GM12878 (cell line): ENCODE measurements at regions of chr5 and their contacts with region 1.

Region 1: DNA sequence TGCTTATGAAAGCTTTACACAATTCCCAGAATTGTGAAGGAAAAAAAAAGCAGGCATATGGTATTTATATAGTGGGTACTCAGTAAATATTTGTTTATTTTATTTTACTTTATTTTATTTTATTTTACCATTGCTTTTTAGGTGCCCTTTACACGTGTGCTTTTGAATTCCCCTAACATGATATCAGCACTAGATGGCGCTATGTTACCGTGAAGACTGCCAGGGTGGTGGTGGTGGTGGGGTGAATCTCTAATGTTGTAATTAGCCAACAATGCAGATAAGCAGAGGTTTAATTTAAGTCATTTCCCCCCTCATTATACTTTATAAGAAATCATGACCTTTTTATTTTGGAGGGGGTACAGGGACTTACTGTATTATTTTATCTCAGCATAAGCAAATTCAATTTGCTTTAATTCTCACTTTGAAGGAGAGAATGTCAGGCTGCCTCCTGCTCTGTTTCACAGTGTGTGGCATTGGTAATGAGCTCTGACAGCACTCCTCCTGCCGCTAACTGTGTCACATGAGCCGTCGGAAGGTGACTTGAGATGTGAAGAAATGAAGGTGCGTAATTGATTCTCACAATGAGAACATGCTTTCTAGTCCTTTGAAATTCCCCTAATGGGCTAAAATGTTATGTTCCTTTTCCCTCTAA is 165.6 kb downstream of the YTHDC2 start:
- DNase-seq: peak; percentile 8
- ATAC-seq: peak; percentile 96
- H3K4me3 ChIP-seq: no peak overlapping the region
- H3K27ac ChIP-seq: no peak overlapping the region
- H3K4me1 ChIP-seq: no peaks in the 10 kb centered on the region
- H3K27me3 ChIP-seq: no peaks in the 10 kb centered on the region
- CTCF ChIP-seq: peak; percentile 66 to 83 (median 68)
- EP300 ChIP-seq: no peak
- POLR2A ChIP-seq: no peak
- RAD21 ChIP-seq: peak; percentile 97

Region 2: GRCh38 chr5:114089259-114089658 is 410.2 kb after region 1 on chr5:
- CTCF ChIA-PET with region 1: interaction called, 3 read pairs
- POLR2A ChIA-PET with region 1: no interaction called
- RAD21 ChIA-PET with region 1: no interaction called
- SMC1A ChIA-PET with region 1: no interaction called
- in situ Hi-C with region 1: no loop called
- intact Hi-C with region 1: loop called (anchors 10 kb)
- DNase-seq: no peak
- ATAC-seq: no peak
- H3K4me3 ChIP-seq: no peak overlapping the region
- H3K27ac ChIP-seq: no peak overlapping the region
- H3K4me1 ChIP-seq: no peaks in the 10 kb centered on the region
- H3K27me3 ChIP-seq: no peaks in the 10 kb centered on the region
- CTCF ChIP-seq: no peak
- EP300 ChIP-seq: no peak
- POLR2A ChIP-seq: no peak
- RAD21 ChIP-seq: no peak

Region 3: DNA sequence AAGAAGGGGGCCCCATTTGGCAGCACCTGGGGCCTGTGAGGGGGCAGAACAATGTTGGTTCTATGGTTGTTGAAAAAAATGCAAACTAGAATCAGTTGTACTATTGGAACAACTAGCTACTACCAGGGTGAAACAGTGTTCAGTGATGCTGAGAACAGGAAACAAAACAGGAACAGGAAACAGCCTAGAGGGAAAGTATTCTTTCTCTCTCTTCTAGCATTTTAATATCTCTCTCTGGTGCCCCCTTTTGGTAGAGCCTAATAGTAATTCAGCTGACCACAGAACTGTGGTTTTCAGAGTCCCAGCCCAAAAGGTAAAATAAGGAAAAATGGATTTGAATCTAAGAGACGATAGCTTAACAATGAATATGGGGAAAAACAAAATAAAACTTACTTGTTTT is 544.8 kb after region 1 on chr5:
- CTCF ChIA-PET with region 1: interaction called, 5 read pairs
- POLR2A ChIA-PET with region 1: no interaction called
- RAD21 ChIA-PET with region 1: no interaction called
- SMC1A ChIA-PET with region 1: interaction called, 3 read pairs
- in situ Hi-C with region 1: no loop called
- intact Hi-C with region 1: loop called (anchors 10 kb)
- DNase-seq: no peak
- ATAC-seq: peak; percentile 70
- H3K4me3 ChIP-seq: no peak overlapping the region
- H3K27ac ChIP-seq: no peak overlapping the region
- H3K4me1 ChIP-seq: no peaks in the 10 kb centered on the region
- H3K27me3 ChIP-seq: no peaks in the 10 kb centered on the region
- CTCF ChIP-seq: peak; percentile 21 to 36 (median 35); a peak in 2 of 6 replicates
- EP300 ChIP-seq: no peak
- POLR2A ChIP-seq: no peak
- RAD21 ChIP-seq: peak; percentile 24; the same call in 1 of the 2 replicates

Region 4: GRCh38 chr5:114305402-114306211 is 626.6 kb after region 1 on chr5:
- CTCF ChIA-PET with region 1: interaction called, 4 read pairs
- POLR2A ChIA-PET with region 1: no interaction called
- RAD21 ChIA-PET with region 1: interaction called, 3 read pairs
- SMC1A ChIA-PET with region 1: interaction called, 4 read pairs
- in situ Hi-C with region 1: loop called (anchors 25 kb)
- intact Hi-C with region 1: loop called (anchors 5 kb)
- DNase-seq: no peak
- ATAC-seq: peak; percentile 87
- H3K4me3 ChIP-seq: no peak overlapping the region
- H3K27ac ChIP-seq: no peak overlapping the region
- H3K4me1 ChIP-seq: no peaks in the 10 kb centered on the region
- H3K27me3 ChIP-seq: no peaks in the 10 kb centered on the region; a peak in 1 of 4 replicates
- CTCF ChIP-seq: peak; percentile 38 to 50 (median 43); a peak in 4 of 6 replicates
- EP300 ChIP-seq: no peak
- POLR2A ChIP-seq: no peak
- RAD21 ChIP-seq: peak; percentile 51

Region 5: GRCh38 chr5:114789773-114790402 is 1110.8 kb after region 1 on chr5:
- CTCF ChIA-PET with region 1: interaction called, 10 read pairs
- POLR2A ChIA-PET with region 1: no interaction called
- RAD21 ChIA-PET with region 1: interaction called, 3 read pairs
- SMC1A ChIA-PET with region 1: no interaction called
- in situ Hi-C with region 1: no loop called
- intact Hi-C with region 1: loop called (anchors 1 kb)
- DNase-seq: no peak
- ATAC-seq: peak; percentile 83
- H3K4me3 ChIP-seq: no peak overlapping the region
- H3K27ac ChIP-seq: no peak overlapping the region
- H3K4me1 ChIP-seq: no peaks in the 10 kb centered on the region
- H3K27me3 ChIP-seq: no peaks in the 10 kb centered on the region; a peak in 1 of 4 replicates
- CTCF ChIP-seq: peak; percentile 28 to 64 (median 53); a peak in 5 of 6 replicates
- EP300 ChIP-seq: no peak
- POLR2A ChIP-seq: no peak
- RAD21 ChIP-seq: peak; percentile 60